Activated CD8-positive, alpha-beta memory T cell treated with anti-CD3 and anti-CD28 coated beads, Interleukin-2, amount 10 ng/mL, durations not matched to agents 7 days and 5 days (primary cell): ENCODE measurements at regions of chr14 and their contacts with region 1.

Region 1: DNA sequence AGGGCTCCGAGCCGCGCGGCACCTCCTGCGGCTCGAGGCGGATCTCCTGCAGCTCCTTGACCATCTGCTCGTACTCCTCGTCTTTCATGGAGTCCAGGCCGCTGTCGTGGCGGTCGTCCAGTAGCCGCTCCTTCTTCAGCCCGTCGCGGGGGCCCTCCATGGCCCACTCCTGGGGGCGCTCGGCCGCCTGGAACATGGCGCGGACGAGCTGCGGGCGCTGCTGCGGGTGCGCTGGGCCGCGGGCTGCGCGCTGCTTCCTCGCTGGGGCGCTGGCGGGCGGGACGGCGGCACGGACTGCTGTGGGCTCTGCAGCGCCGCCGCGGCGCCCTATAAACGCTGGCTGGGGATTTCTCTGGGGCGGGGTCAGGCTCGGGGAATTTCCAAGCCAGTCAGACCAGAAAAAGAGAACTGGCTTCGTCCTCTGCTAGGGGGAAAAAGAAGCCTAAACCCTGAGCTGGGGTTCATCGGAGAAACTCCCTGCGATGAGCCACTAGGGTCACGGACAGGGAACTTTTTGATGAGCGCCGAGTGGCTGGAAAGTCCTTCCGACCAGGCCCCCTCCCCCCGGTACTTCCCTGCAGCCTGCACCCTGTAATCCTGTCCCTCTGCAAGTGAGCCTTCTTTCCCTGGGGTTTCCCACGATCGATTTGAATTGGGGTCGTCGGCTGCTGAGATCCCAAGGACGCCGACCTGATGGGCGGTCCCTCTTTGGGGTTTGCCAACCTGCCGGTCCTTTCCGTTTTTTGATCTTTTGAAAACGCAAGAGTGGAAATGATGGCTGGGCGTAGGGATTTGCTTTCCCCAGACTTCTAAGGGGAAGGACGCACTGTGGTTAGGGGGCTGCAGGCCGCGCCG is at the start of gene NFKBIA:
- DNase-seq: peak; percentile 93
- ATAC-seq: peak; percentile 72
- H3K4me3 Mint-ChIP-seq: peak within 1 kb of the TSS; percentile 94
- H3K27ac Mint-ChIP-seq: peak within 1 kb of the TSS; percentile 95
- H3K4me1 Mint-ChIP-seq: peaks cover 54% of the 10 kb centered on the region
- H3K27me3 Mint-ChIP-seq: no peaks in the 10 kb centered on the region
- total RNA-seq, gene NFKBIA: 82.9 to 245 TPM

Region 2: DNA sequence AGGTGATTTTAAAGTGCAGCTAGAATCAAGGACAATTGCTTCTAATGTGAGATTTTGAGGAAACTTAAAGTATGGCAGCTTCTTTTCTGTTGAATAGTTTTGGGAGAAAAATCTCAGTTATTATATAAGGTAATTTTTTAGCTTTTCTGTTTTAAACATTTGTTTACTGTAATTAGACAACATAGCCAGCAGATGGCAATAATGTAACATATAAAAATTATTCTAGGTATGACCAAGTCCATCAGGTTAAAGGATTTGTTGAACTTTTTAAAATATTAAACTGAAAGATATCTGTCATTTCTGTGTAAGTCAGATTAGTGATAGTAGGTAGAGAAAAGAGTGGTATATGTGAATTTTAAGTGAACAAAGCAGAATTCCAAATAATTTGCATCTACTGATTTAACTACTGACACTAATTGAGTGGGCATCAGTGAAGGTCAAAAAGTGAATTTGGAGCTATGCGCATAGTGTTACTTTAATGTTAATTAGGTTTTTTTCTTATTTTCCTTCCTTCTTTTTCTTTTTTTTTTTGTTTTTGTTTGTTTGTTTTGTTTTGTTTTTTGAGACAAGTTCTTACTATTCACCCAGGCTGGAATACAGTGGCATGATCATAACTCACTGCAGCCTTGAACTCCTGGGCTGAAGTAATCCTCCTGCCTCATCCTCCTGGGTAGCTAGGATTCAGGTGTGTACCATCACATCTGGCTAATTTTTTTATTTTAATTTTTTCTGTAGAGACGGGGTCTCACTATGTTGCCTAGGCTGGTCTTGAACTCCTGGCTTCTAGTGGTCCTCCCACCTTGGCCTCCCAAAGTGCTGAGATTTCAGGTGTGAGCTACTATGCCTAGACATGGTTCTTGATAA is 263.7 kb before region 1 on chr14:
- CTCF ChIA-PET with region 1: interaction called, 33 read pairs
- DNase-seq: no peak
- ATAC-seq: no peak
- H3K4me3 Mint-ChIP-seq: no peak overlapping the region
- H3K27ac Mint-ChIP-seq: no peak overlapping the region
- H3K4me1 Mint-ChIP-seq: peaks cover 8% of the 10 kb centered on the region
- H3K27me3 Mint-ChIP-seq: no peaks in the 10 kb centered on the region

Region 3: GRCh38 chr14:35229495-35230089 is 175.1 kb before region 1 on chr14:
- CTCF ChIA-PET with region 1: interaction called, 80 read pairs
- DNase-seq: no peak
- ATAC-seq: peak; percentile 57
- H3K4me3 Mint-ChIP-seq: no peak overlapping the region
- H3K27ac Mint-ChIP-seq: peak overlapping the region; percentile 39
- H3K4me1 Mint-ChIP-seq: peaks cover 20% of the 10 kb centered on the region
- H3K27me3 Mint-ChIP-seq: no peaks in the 10 kb centered on the region

Region 4: GRCh38 chr14:35292051-35292769 is 112.5 kb before region 1 on chr14 and contains the start of gene PSMA6:
- CTCF ChIA-PET with region 1: interaction called, 36 read pairs
- DNase-seq: peak; percentile 100
- ATAC-seq: peak; percentile 94
- H3K4me3 Mint-ChIP-seq: peak within 1 kb of the TSS; percentile 96
- H3K27ac Mint-ChIP-seq: peak within 1 kb of the TSS; percentile 97
- H3K4me1 Mint-ChIP-seq: peaks cover 38% of the 10 kb centered on the region
- H3K27me3 Mint-ChIP-seq: no peaks in the 10 kb centered on the region
- total RNA-seq, gene PSMA6: 251 to 299 TPM

Region 5: DNA sequence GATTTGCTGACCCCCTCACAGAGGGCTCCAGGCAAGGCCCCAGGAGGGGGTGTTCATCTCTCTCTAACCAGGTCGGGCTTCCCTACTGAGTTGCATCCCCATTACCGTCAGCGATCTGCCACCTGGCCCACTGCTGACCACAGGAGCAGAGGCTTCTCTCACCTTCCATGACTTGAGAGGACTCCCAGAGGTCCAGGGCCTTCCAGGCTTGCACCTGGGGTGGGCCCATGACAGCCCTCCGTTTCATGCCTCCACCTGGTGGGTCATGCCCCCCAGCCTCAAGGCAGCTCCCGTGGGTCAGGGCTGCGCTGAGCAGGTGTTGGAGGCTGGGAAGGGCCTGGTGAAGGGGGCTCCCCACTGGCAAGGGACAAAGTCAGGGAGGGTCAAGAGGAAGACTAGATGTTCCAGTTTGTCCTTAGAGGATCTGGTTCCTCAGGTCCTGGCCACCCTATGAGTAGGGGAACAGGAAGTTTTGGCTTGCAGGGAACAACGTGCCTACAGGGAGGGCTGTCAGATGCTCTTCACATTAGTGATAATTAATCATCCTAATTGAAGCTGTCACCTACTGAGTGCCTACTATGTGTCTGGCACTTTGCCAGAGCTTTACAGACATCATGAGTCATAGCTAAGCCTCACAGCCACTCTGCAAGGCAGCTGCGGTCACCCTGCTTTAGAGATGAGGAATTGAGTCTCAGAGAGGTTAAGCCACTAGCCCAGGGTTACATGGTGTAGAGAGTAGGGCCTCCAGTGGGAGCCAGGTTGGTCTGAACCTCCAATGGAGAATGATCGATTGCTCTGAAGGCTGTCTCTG is 13.9 kb before region 1 on chr14:
- CTCF ChIA-PET with region 1: interaction called, 26 read pairs
- DNase-seq: peak; percentile 80
- ATAC-seq: peak; percentile 88
- H3K4me3 Mint-ChIP-seq: no peak overlapping the region
- H3K27ac Mint-ChIP-seq: no peak overlapping the region
- H3K4me1 Mint-ChIP-seq: peaks cover 24% of the 10 kb centered on the region
- H3K27me3 Mint-ChIP-seq: no peaks in the 10 kb centered on the region

Region 6: GRCh38 chr14:35438910-35439713 is 34.4 kb after region 1 on chr14:
- CTCF ChIA-PET with region 1: no interaction called
- DNase-seq: no peak
- ATAC-seq: no peak
- H3K4me3 Mint-ChIP-seq: no peak overlapping the region
- H3K27ac Mint-ChIP-seq: no peak overlapping the region
- H3K4me1 Mint-ChIP-seq: peaks cover 8% of the 10 kb centered on the region
- H3K27me3 Mint-ChIP-seq: peaks cover 4% of the 10 kb centered on the region